CD8-positive, alpha-beta T cell (primary cell): ENCODE measurements at regions of chr11 and their contacts with region 1.

Region 1: GRCh38 chr11:1852877-1853276 is at the start of gene LSP1:
- DNase-seq: peak; percentile 64 to 96 (median 86)
- ATAC-seq: peak; percentile 65
- H3K4me3 ChIP-seq: peak within 1 kb of the TSS; percentile 81 to 100
- H3K4me3 Mint-ChIP-seq: peak within 1 kb of the TSS; percentile 94
- H3K27ac ChIP-seq: peak within 1 kb of the TSS; percentile 90 to 91
- H3K27ac Mint-ChIP-seq: peak within 1 kb of the TSS; percentile 92
- H3K4me1 ChIP-seq: peaks cover 81% of the 10 kb centered on the region
- H3K4me1 Mint-ChIP-seq: peaks cover 67% of the 10 kb centered on the region
- H3K27me3 ChIP-seq: no peaks in the 10 kb centered on the region
- H3K27me3 Mint-ChIP-seq: no peaks in the 10 kb centered on the region
- CTCF ChIP-seq: no peak
- total RNA-seq, gene LSP1: 190 to 191 TPM

Region 2: DNA sequence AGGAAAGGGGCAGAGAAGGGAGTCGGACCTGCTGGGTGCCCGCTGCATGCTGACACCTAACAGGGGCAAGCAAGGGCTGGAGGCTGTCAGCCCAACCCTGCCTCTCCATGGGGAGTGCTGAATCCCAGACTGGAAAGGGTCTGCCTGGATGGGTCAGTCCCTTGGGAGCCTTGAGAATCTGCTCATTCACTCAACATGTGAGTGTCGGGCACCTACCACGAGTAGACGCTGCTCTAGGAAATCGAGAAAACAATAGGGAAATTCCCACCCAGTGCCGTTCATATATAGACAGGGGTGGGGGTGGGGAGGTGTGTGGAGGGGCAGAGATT is 84.8 kb before region 1 on chr11:
- CTCF ChIA-PET with region 1: no interaction called
- POLR2A ChIA-PET with region 1: no interaction called
- intact Hi-C with region 1: no loop called
- DNase-seq: no peak
- ATAC-seq: no peak
- H3K4me3 ChIP-seq: no peak overlapping the region
- H3K4me3 Mint-ChIP-seq: no peak overlapping the region
- H3K27ac ChIP-seq: no peak overlapping the region
- H3K27ac Mint-ChIP-seq: no peak overlapping the region
- H3K4me1 ChIP-seq: peaks cover 20% of the 10 kb centered on the region
- H3K4me1 Mint-ChIP-seq: peaks cover 15% of the 10 kb centered on the region
- H3K27me3 ChIP-seq: no peaks in the 10 kb centered on the region
- H3K27me3 Mint-ChIP-seq: no peaks in the 10 kb centered on the region
- CTCF ChIP-seq: no peak

Region 3: DNA sequence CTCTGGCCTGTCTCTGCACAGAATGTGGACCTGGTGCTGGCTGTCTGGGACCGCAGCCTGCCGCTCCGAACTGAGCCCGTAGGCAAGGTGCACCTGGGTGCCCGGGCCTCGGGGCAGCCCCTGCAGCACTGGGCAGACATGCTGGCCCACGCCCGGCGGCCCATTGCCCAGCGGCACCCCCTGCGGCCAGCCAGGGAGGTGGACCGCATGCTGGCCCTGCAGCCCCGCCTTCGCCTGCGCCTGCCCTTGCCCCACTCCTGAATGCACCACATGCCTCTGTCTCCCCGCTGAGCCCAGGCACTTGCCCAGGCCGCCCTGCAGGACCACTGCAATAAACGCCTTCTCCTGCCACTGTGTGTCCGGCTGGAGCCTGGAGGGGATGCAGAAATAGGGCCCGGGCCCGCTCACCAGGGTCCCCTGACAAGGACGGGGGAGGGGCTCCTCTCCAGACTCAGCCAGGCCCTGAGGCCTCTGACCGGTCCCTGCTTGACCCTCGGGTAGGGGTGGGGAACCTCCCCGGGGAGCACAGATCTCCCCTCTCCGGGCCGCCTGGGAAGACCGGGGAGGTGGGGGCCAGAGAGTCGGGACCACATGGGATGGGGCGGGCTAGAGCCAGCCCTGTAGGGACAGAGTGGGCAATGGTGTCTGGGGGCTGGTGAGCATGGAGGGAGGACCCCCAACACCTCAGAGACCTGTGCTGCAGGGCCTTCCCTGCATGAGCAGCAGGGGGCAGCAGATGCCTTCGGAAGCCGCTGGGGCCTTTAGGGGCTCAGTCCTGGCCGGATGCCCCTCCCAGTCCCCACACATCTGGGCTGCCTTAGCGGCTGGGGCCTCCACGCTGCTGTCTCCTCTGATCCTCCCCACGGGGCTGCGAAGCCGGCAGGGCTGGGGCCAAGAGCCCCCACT is 15.5 kb before region 1 on chr11:
- CTCF ChIA-PET with region 1: interaction called, 48 read pairs
- POLR2A ChIA-PET with region 1: interaction called, 4 read pairs
- intact Hi-C with region 1: loop called in 1 of 2 experiments (anchors 1 kb)
- DNase-seq: peak; percentile 73 to 94 (median 88)
- ATAC-seq: peak; percentile 98
- H3K4me3 ChIP-seq: no peak overlapping the region
- H3K4me3 Mint-ChIP-seq: no peak overlapping the region
- H3K27ac ChIP-seq: no peak overlapping the region
- H3K27ac Mint-ChIP-seq: no peak overlapping the region
- H3K4me1 ChIP-seq: peaks cover 25% of the 10 kb centered on the region
- H3K4me1 Mint-ChIP-seq: peaks cover 10% of the 10 kb centered on the region
- H3K27me3 ChIP-seq: peaks cover 0 to 6% of the 10 kb centered on the region in 2 experiments
- H3K27me3 Mint-ChIP-seq: no peaks in the 10 kb centered on the region
- CTCF ChIP-seq: peak; percentile 84

Region 4: GRCh38 chr11:1870721-1871466 is 18.0 kb after region 1 on chr11:
- CTCF ChIA-PET with region 1: interaction called, 5 read pairs
- POLR2A ChIA-PET with region 1: interaction called, 34 read pairs
- intact Hi-C with region 1: loop called (anchors 1 to 2 kb)
- DNase-seq: peak in 8 of 9 experiments; percentile 31 to 82 (median 62)
- ATAC-seq: peak; percentile 84
- H3K4me3 ChIP-seq: peak overlapping the region; percentile 26 to 33
- H3K4me3 Mint-ChIP-seq: peak overlapping the region; percentile 76
- H3K27ac ChIP-seq: peak overlapping the region; percentile 45 to 46
- H3K27ac Mint-ChIP-seq: peak overlapping the region; percentile 94
- H3K4me1 ChIP-seq: peaks cover 70% of the 10 kb centered on the region
- H3K4me1 Mint-ChIP-seq: peaks cover 59% of the 10 kb centered on the region
- H3K27me3 ChIP-seq: no peaks in the 10 kb centered on the region
- H3K27me3 Mint-ChIP-seq: no peaks in the 10 kb centered on the region
- CTCF ChIP-seq: no peak

Region 5: DNA sequence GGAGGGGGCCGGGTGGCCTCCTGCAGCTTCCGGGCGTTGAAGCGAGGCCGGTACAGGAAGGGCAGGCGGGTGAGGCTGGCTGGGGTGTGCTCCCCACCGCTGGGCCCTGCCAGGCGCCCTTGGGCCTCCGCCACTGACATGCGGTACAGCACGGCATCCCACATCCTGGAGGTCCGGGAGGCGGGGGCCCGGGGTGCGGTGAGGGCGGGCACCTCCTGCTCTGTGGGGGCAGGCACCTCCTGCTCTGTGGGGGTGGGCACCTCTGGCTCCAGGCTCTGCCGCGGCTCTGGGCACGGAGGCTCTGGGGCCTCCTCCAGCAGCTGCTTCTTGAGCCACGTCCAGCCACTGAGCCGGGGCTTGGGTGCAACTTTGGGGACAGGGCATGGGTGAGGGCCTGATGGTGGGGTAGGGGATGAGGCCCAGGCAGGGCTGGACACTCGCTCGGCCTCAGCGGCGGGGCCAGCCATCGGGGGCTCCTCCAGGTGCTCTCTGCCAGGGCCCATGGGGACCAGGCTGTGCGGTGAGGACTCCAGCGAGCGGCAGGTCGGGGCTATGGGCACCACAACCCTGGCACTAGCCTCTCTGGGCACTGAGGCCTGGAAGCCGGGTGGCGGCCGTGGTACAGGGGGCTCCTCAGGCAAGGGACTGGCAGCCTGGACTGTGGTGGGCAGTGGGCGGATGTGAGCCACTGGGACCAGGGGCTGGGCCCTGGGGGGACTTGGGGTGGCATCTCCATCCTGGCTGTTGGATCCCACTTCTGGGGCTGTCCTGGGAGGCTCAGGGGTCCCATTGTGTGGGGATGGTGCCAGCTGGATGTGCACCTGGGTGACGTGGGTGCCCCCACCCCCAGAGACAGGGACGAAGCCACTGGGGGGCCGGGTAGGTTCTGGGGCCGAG is 36.6 kb after region 1 on chr11:
- CTCF ChIA-PET with region 1: interaction called, 74 read pairs
- POLR2A ChIA-PET with region 1: interaction called, 27 read pairs
- intact Hi-C with region 1: loop called in 1 of 2 experiments (anchors 1 kb)
- DNase-seq: peak; percentile 63 to 94 (median 83)
- ATAC-seq: peak; percentile 91
- H3K4me3 ChIP-seq: peak overlapping the region; percentile 45 to 64
- H3K4me3 Mint-ChIP-seq: peak overlapping the region; percentile 78
- H3K27ac ChIP-seq: peak overlapping the region; percentile 38 to 70
- H3K27ac Mint-ChIP-seq: peak overlapping the region; percentile 83
- H3K4me1 ChIP-seq: peaks cover 51% of the 10 kb centered on the region
- H3K4me1 Mint-ChIP-seq: peaks cover 52% of the 10 kb centered on the region
- H3K27me3 ChIP-seq: no peaks in the 10 kb centered on the region
- H3K27me3 Mint-ChIP-seq: no peaks in the 10 kb centered on the region
- CTCF ChIP-seq: no peak